IMR-90 (cell line): ENCODE measurements at regions of chr6 and their contacts with region 1.

Region 1: GRCh38 chr6:25173951-25174474 is 105.2 kb upstream of the CARMIL1 start:
- DNase-seq: peak; percentile 99
- ATAC-seq: peak; percentile 40
- H3K4me3 ChIP-seq: no peak overlapping the region
- H3K27ac ChIP-seq: peak overlapping the region; percentile 95
- H3K4me1 ChIP-seq: peaks cover 21% of the 10 kb centered on the region
- H3K27me3 ChIP-seq: no peaks in the 10 kb centered on the region
- CTCF ChIP-seq: no peak
- POLR2A ChIP-seq: no peak
- RAD21 ChIP-seq: no peak

Region 2: GRCh38 chr6:25193460-25194171 is 19.6 kb after region 1 on chr6:
- CTCF ChIA-PET with region 1: no interaction called
- POLR2A ChIA-PET with region 1: no interaction called
- dilution Hi-C with region 1: no loop called
- in situ Hi-C with region 1: no loop called
- intact Hi-C with region 1: loop called (anchors 1 kb)
- DNase-seq: peak; percentile 95
- ATAC-seq: peak; percentile 77
- H3K4me3 ChIP-seq: no peak overlapping the region
- H3K27ac ChIP-seq: peak overlapping the region; percentile 92; the same call in 1 of the 2 replicates
- H3K4me1 ChIP-seq: peaks cover 8% of the 10 kb centered on the region
- H3K27me3 ChIP-seq: no peaks in the 10 kb centered on the region
- CTCF ChIP-seq: no peak
- POLR2A ChIP-seq: no peak
- RAD21 ChIP-seq: no peak

Region 3: DNA sequence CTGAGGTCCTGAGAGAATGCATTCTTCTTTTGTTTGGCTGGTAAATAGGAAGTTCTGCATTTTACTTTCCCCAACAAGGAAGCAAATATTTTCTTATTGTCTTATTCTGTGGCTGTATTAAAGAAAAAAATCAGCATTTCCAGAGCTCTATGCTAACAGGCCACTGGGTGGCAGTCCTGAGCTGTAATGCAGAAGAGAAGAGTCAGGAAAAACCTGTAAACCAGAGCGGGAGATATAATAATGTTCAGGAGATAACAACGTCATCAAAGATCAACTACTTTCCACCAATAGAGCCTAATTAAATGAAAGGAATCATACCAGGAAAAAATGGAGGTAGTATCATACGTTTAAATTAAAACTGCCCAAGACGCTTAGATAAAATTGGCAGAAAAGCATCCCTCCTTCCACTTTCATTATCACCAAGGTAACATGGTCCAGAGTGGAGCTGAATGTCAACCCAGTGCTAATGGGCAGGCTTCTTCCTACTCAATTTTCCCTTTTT is 49.5 kb after region 1 on chr6:
- CTCF ChIA-PET with region 1: interaction called, 3 read pairs
- POLR2A ChIA-PET with region 1: no interaction called
- dilution Hi-C with region 1: no loop called
- in situ Hi-C with region 1: no loop called
- intact Hi-C with region 1: loop called (anchors 1 kb)
- DNase-seq: peak; percentile 73
- ATAC-seq: peak; percentile 96
- H3K4me3 ChIP-seq: no peak overlapping the region
- H3K27ac ChIP-seq: no peak overlapping the region
- H3K4me1 ChIP-seq: no peaks in the 10 kb centered on the region
- H3K27me3 ChIP-seq: no peaks in the 10 kb centered on the region
- CTCF ChIP-seq: peak; percentile 95
- POLR2A ChIP-seq: no peak
- RAD21 ChIP-seq: peak; percentile 94

Region 4: GRCh38 chr6:26025894-26026832 is 852.1 kb after region 1 on chr6:
- CTCF ChIA-PET with region 1: no interaction called
- POLR2A ChIA-PET with region 1: interaction called, 12 read pairs
- dilution Hi-C with region 1: no loop called
- in situ Hi-C with region 1: no loop called
- intact Hi-C with region 1: no loop called
- DNase-seq: peak; percentile 99
- ATAC-seq: peak; percentile 41
- H3K4me3 ChIP-seq: peak overlapping the region; percentile 68; the same call in 1 of the 2 replicates
- H3K27ac ChIP-seq: peak overlapping the region; percentile 59
- H3K4me1 ChIP-seq: peaks cover 4% of the 10 kb centered on the region
- H3K27me3 ChIP-seq: no peaks in the 10 kb centered on the region
- CTCF ChIP-seq: peak; percentile 96
- POLR2A ChIP-seq: 0 out of 2 replicates have a peak, but pooled peaks have one; percentile 38
- RAD21 ChIP-seq: peak; percentile 72